BJ (cell line): ENCODE measurements at regions of chr7 and their contacts with region 1.

Region 1: GRCh38 chr7:94449148-94449725 is 54.5 kb downstream of the COL1A2 start:
- DNase-seq: no peak
- H3K4me3 ChIP-seq: no peak overlapping the region
- H3K27me3 ChIP-seq: no peaks in the 10 kb centered on the region
- CTCF ChIP-seq: peak; percentile 60

Region 2: GRCh38 chr7:94657771-94658693 is 208.8 kb after region 1 on chr7:
- CTCF ChIA-PET with region 1: interaction called, 30 read pairs
- POLR2A ChIA-PET with region 1: interaction called, 19 read pairs
- DNase-seq: peak; percentile 58
- H3K4me3 ChIP-seq: peak overlapping the region; percentile 63
- H3K27me3 ChIP-seq: no peaks in the 10 kb centered on the region
- CTCF ChIP-seq: no peak

Region 3: GRCh38 chr7:94949532-94949931 is 500.3 kb after region 1 on chr7:
- CTCF ChIA-PET with region 1: no interaction called
- POLR2A ChIA-PET with region 1: no interaction called
- DNase-seq: no peak
- H3K4me3 ChIP-seq: no peak overlapping the region
- H3K27me3 ChIP-seq: no peaks in the 10 kb centered on the region
- CTCF ChIP-seq: no peak

Region 4: GRCh38 chr7:95045236-95045923 is 596.1 kb after region 1 on chr7:
- CTCF ChIA-PET with region 1: interaction called, 15 read pairs
- POLR2A ChIA-PET with region 1: interaction called, 8 read pairs
- DNase-seq: no peak
- H3K4me3 ChIP-seq: no peak overlapping the region
- H3K27me3 ChIP-seq: no peaks in the 10 kb centered on the region
- CTCF ChIP-seq: 0 out of 2 replicates have a peak, but pooled peaks have one; percentile 27

Region 5: GRCh38 chr7:95199779-95200558 is 750.7 kb after region 1 on chr7:
- CTCF ChIA-PET with region 1: interaction called, 38 read pairs
- POLR2A ChIA-PET with region 1: no interaction called
- DNase-seq: no peak
- H3K4me3 ChIP-seq: no peak overlapping the region
- H3K27me3 ChIP-seq: no peaks in the 10 kb centered on the region
- CTCF ChIP-seq: peak; percentile 78

Region 6: DNA sequence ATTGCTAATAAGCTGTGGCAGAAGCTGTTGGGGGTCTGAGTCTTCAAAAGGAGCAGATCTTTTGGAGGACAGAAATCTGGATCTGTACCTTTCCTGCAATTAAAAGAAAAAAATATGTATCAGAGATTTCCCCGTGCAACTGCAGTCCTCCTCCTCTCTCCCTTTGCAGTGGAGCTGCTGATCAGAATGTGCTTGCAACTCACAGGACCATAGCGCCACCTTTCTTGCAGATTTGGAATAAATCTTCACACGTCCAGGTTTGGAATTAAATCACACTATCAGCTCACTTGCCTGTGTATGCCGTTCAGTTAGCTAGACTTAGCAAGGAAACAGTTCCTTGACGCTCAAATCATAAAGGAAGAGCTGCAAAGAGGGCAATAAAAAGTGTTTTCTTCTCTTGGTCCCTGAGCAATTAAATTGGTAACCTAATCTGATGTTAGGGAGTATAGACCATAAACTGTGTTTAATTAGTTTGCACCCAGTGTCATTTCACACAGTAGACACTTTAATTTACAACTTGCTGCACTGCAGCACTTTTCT is 797.7 kb after region 1 on chr7:
- CTCF ChIA-PET with region 1: interaction called, 22 read pairs
- POLR2A ChIA-PET with region 1: no interaction called
- DNase-seq: peak; percentile 6
- H3K4me3 ChIP-seq: no peak overlapping the region
- H3K27me3 ChIP-seq: no peaks in the 10 kb centered on the region
- CTCF ChIP-seq: peak; percentile 69